ENCODE measurements at regions of chr6 and their contacts with region 1.

Region 1: GRCh38 chr6:107731422-107732319 is 92.4 kb downstream of the SCML4 start:
- DNase-seq: peak; percentile 61
- ATAC-seq: peak; percentile 43
- H3K4me3 Mint-ChIP-seq: peak overlapping the region; percentile 99
- H3K27ac Mint-ChIP-seq: peak overlapping the region; percentile 93
- H3K4me1 Mint-ChIP-seq: peaks cover 71% of the 10 kb centered on the region
- H3K27me3 Mint-ChIP-seq: no peaks in the 10 kb centered on the region

Region 2: GRCh38 chr6:107715550-107716321 is 15.9 kb before region 1 on chr6:
- POLR2A ChIA-PET with region 1: interaction called, 15 read pairs
- DNase-seq: no peak
- ATAC-seq: peak; percentile 11
- H3K4me3 Mint-ChIP-seq: peak overlapping the region; percentile 55
- H3K27ac Mint-ChIP-seq: peak overlapping the region; percentile 77
- H3K4me1 Mint-ChIP-seq: peaks cover 54% of the 10 kb centered on the region
- H3K27me3 Mint-ChIP-seq: no peaks in the 10 kb centered on the region

Region 3: GRCh38 chr6:107786709-107787588 is 55.3 kb after region 1 on chr6:
- POLR2A ChIA-PET with region 1: interaction called, 25 read pairs
- DNase-seq: no peak
- ATAC-seq: peak; percentile 82
- H3K4me3 Mint-ChIP-seq: peak overlapping the region; percentile 75
- H3K27ac Mint-ChIP-seq: peak overlapping the region; percentile 87
- H3K4me1 Mint-ChIP-seq: peaks cover 51% of the 10 kb centered on the region
- H3K27me3 Mint-ChIP-seq: no peaks in the 10 kb centered on the region

Region 4: DNA sequence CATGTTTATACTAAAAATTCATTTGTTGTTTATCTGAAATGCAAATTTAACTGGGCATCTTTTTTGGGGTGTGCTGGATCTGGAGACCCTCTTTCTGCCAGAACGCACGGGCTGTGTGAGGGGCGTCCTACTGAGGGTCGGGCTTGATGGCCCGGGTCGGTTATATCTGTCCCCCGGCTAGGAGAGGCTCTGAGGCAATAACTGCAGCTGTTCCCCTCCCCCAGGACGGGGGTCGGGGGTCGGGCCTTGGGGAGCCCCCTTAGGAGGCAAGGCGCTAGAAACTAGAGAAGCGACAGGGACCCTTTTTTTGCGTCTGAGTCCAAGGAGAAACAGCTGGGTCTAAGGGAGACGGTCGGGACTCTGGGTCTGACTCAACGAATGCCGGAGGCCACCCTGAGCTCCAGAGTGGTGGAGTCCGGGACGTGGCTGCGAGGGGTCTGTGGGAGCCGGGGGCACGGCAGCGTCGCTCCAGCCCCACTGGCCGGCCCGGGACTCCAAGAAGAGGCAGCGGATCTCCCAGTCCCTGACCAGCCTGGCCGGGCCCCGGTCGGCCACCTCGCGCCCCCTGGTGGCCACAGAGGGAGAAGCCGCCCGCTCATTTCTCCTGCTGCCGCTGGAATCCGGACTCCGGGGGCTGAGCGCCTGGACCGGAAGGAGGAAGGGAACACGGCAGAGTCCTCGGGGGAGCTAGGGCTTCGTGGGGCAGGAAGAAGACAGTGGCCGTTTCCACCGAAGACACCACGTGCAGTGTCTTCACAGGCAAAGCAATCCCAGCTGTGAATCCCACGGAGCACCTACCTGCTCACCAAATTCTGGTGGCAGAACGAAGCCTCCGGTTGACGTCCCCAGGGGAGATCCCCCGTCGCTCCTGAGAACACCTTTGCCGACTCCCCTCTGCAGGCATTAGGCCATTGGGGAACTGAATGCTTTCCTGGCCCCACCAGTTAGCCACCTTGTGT is 116.5 kb after region 1 on chr6:
- POLR2A ChIA-PET with region 1: interaction called, 23 read pairs
- DNase-seq: peak; percentile 92
- ATAC-seq: peak; percentile 84
- H3K4me3 Mint-ChIP-seq: peak overlapping the region; percentile 82
- H3K27ac Mint-ChIP-seq: peak overlapping the region; percentile 77
- H3K4me1 Mint-ChIP-seq: peaks cover 21% of the 10 kb centered on the region
- H3K27me3 Mint-ChIP-seq: no peaks in the 10 kb centered on the region

Measured in activated naive CD8-positive, alpha-beta T cell treated with anti-CD3 and anti-CD28 coated beads, Interleukin-2, amount 10 ng/mL, durations not matched to agents 7 days and 5 days (primary cell).